Activated CD4-positive, alpha-beta T cell treated with anti-CD3 and anti-CD28 coated beads, Interleukin-2, amount 10 ng/mL, durations not matched to agents 24 days and 14 days (primary cell): ENCODE measurements at regions of chr6 and their contacts with region 1.

Region 1: GRCh38 chr6:25223490-25223991 is 55.6 kb upstream of the CARMIL1 start:
- DNase-seq: peak; percentile 86
- H3K4me3 Mint-ChIP-seq: peak overlapping the region; percentile 75
- H3K27ac Mint-ChIP-seq: no peak overlapping the region
- H3K4me1 Mint-ChIP-seq: peaks cover 12% of the 10 kb centered on the region
- H3K27me3 Mint-ChIP-seq: peaks cover 2% of the 10 kb centered on the region

Region 2: GRCh38 chr6:24547243-24547642 is 676.3 kb before region 1 on chr6:
- intact Hi-C with region 1: no loop called
- DNase-seq: peak; percentile 77
- H3K4me3 Mint-ChIP-seq: no peak overlapping the region
- H3K27ac Mint-ChIP-seq: no peak overlapping the region
- H3K4me1 Mint-ChIP-seq: peaks cover 6% of the 10 kb centered on the region
- H3K27me3 Mint-ChIP-seq: peaks cover 21% of the 10 kb centered on the region

Region 3: GRCh38 chr6:25205629-25206028 is 17.9 kb before region 1 on chr6:
- intact Hi-C with region 1: no loop called
- DNase-seq: no peak
- H3K4me3 Mint-ChIP-seq: no peak overlapping the region
- H3K27ac Mint-ChIP-seq: no peak overlapping the region
- H3K4me1 Mint-ChIP-seq: no peaks in the 10 kb centered on the region
- H3K27me3 Mint-ChIP-seq: peaks cover 30% of the 10 kb centered on the region

Region 4: DNA sequence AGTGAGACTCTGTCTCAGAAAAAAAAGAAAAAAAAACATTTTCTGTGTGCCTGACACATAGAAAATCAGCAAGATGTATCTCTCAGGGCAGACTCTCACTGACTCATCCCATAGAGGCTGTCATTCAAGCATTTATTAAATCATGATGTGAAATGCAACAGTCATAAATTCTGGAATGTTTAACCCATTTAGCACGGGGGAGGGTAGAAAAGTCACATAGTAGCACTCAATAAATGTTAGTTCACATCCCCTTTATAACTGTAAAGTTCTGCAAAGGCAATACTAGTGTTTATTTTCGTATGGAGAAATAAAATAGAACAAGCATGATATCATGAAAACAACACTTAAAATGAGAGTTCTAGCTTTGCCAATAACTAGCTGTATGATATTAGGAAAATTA is 40.1 kb after region 1 on chr6:
- intact Hi-C with region 1: loop called (anchors 5 kb)
- DNase-seq: no peak
- H3K4me3 Mint-ChIP-seq: no peak overlapping the region
- H3K27ac Mint-ChIP-seq: no peak overlapping the region
- H3K4me1 Mint-ChIP-seq: no peaks in the 10 kb centered on the region
- H3K27me3 Mint-ChIP-seq: peaks cover 22% of the 10 kb centered on the region

Region 5: GRCh38 chr6:25490018-25490801 is 266.7 kb after region 1 on chr6:
- intact Hi-C with region 1: loop called (anchors 1 kb)
- DNase-seq: peak; percentile 91
- H3K4me3 Mint-ChIP-seq: no peak overlapping the region
- H3K27ac Mint-ChIP-seq: no peak overlapping the region
- H3K4me1 Mint-ChIP-seq: peaks cover 2% of the 10 kb centered on the region
- H3K27me3 Mint-ChIP-seq: no peaks in the 10 kb centered on the region

Region 6: GRCh38 chr6:25556516-25556915 is 333.0 kb after region 1 on chr6:
- intact Hi-C with region 1: loop called (anchors 1 kb)
- DNase-seq: peak; percentile 92
- H3K4me3 Mint-ChIP-seq: no peak overlapping the region
- H3K27ac Mint-ChIP-seq: no peak overlapping the region
- H3K4me1 Mint-ChIP-seq: no peaks in the 10 kb centered on the region
- H3K27me3 Mint-ChIP-seq: no peaks in the 10 kb centered on the region

Region 7: DNA sequence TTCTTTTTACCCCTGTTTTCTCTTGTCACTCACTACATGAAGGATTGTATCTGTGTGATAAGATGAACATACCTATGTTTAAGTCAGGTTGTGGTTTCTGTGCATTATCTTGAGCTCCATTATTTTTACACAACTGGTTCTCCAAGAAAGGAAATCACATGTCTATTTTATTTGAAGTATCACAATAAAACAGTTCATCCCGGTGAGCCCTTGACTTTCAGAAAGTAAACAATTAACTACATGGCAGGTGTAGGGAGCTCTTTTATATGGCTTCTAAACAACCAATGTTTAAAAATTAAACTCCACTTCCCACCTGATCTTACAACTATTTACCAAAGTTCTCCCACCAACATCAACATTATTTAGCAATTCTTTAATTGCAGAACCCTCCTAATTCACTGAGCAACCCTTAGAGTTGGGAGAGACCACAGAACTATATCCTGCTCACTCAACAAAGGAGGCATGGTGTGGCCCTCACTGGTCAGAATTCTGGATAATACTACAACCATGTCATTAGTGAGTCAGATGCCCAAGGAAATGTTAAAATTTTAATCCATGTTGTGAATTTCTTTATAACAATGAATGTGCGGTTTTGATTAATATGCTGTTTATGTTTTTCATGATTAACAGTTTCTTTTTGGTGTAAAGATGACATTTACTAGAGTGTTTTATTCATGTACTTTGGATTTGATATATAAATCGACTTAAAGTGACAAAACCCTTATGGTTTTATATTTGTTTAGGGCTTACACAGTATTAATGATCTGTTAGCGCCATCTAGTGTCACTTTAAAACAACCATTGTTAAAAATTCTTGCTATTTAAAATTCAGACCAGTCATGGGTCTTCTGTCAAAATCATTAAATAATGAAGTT is 378.5 kb after region 1 on chr6:
- intact Hi-C with region 1: loop called (anchors 1 kb)
- DNase-seq: no peak
- H3K4me3 Mint-ChIP-seq: no peak overlapping the region
- H3K27ac Mint-ChIP-seq: no peak overlapping the region
- H3K4me1 Mint-ChIP-seq: peaks cover 2% of the 10 kb centered on the region
- H3K27me3 Mint-ChIP-seq: no peaks in the 10 kb centered on the region